CD4-positive, alpha-beta T cell (primary cell): ENCODE measurements at regions of chr6 and their contacts with region 1.

Region 1: DNA sequence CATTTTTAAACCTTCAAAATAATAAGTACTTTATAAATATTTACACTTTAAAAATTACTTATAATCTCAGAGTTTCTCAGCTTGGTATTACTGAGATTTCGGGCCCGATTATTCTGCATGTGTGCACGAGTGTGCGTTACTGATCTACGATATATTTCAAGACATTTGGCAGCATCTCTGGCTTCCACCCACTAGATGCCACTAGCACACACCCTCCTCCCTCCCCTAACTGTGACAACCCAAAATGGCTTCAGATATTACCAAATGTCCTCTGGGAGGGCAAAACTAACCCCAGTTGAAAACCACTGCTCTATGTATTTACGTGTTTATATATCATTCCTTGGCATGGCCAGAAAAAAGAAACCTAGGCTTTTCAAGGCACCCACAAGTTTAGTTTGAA is 95.9 kb downstream of the FYN start:
- DNase-seq: peak in 3 of 14 experiments; percentile 72 to 77 (median 73)
- ATAC-seq: peak; percentile 58
- H3K4me3 ChIP-seq: no peak overlapping the region
- H3K4me3 Mint-ChIP-seq: peak overlapping the region; percentile 59
- H3K27ac ChIP-seq: peak overlapping the region; percentile 34 to 49
- H3K27ac Mint-ChIP-seq: peak overlapping the region; percentile 84
- H3K4me1 ChIP-seq: peaks cover 77% of the 10 kb centered on the region
- H3K4me1 Mint-ChIP-seq: peaks cover 89% of the 10 kb centered on the region
- H3K27me3 ChIP-seq: no peaks in the 10 kb centered on the region
- H3K27me3 Mint-ChIP-seq: no peaks in the 10 kb centered on the region
- CTCF ChIP-seq: peak; percentile 25

Region 2: DNA sequence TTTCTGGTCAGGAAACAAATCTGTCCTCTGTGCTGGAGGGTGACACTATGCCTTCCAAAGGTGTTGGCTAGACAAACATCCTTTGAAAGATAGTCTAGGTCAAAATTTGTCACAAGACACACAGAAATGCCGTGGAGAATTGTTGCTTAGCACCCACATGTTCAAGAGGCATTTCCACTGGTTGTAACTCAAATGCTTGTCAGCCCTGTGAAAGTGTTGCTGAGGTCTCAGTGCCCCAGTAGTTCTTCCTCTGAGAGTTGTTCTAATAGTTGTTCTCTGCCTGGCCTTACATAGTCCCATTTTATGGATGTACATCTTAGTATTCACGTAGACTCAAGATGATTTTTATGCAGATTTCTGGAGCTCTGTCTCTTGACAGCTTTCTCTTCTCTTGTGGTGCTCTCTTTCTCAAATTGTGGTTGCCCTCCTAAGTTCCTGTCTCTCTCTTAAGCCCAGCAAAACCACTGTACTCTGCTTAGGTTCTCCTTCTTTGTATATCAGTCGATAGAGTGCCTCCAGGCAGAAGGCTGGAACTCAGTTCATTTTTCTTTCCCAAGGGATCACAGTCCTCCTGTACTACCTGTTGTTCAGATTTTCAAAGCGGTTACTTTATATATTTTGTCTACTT is 254.8 kb before region 1 on chr6:
- CTCF ChIA-PET with region 1: no interaction called
- POLR2A ChIA-PET with region 1: no interaction called
- intact Hi-C with region 1: no loop called
- DNase-seq: peak in 2 of 14 experiments; percentile 11 to 15
- ATAC-seq: peak; percentile 49
- H3K4me3 ChIP-seq: no peak overlapping the region
- H3K4me3 Mint-ChIP-seq: no peak overlapping the region
- H3K27ac ChIP-seq: no peak overlapping the region
- H3K27ac Mint-ChIP-seq: no peak overlapping the region
- H3K4me1 ChIP-seq: peaks cover 4% of the 10 kb centered on the region
- H3K4me1 Mint-ChIP-seq: peaks cover 17% of the 10 kb centered on the region
- H3K27me3 ChIP-seq: no peaks in the 10 kb centered on the region
- H3K27me3 Mint-ChIP-seq: no peaks in the 10 kb centered on the region
- CTCF ChIP-seq: no peak

Region 3: GRCh38 chr6:111721753-111722154 is 55.6 kb before region 1 on chr6:
- CTCF ChIA-PET with region 1: interaction called, 4 read pairs
- POLR2A ChIA-PET with region 1: interaction called, 4 read pairs
- intact Hi-C with region 1: loop called in 1 of 2 experiments (anchors 10 kb)
- DNase-seq: peak in 11 of 14 experiments; percentile 15 to 75 (median 33)
- ATAC-seq: peak; percentile 35
- H3K4me3 ChIP-seq: no peak overlapping the region
- H3K4me3 Mint-ChIP-seq: no peak overlapping the region
- H3K27ac ChIP-seq: no peak overlapping the region
- H3K27ac Mint-ChIP-seq: peak overlapping the region; percentile 93
- H3K4me1 ChIP-seq: peaks cover 67% of the 10 kb centered on the region
- H3K4me1 Mint-ChIP-seq: peaks cover 83% of the 10 kb centered on the region
- H3K27me3 ChIP-seq: no peaks in the 10 kb centered on the region
- H3K27me3 Mint-ChIP-seq: no peaks in the 10 kb centered on the region
- CTCF ChIP-seq: peak; percentile 60

Region 4: GRCh38 chr6:111793711-111794111 is 16.4 kb after region 1 on chr6:
- CTCF ChIA-PET with region 1: interaction called, 4 read pairs
- POLR2A ChIA-PET with region 1: no interaction called
- intact Hi-C with region 1: loop called in 1 of 2 experiments (anchors 2 kb)
- DNase-seq: peak in 8 of 14 experiments; percentile 26 to 88 (median 48)
- ATAC-seq: peak; percentile 63
- H3K4me3 ChIP-seq: peak overlapping the region; percentile 39
- H3K4me3 Mint-ChIP-seq: peak overlapping the region; percentile 79
- H3K27ac ChIP-seq: peak overlapping the region; percentile 5 to 61
- H3K27ac Mint-ChIP-seq: peak overlapping the region; percentile 78
- H3K4me1 ChIP-seq: peaks cover 57% of the 10 kb centered on the region
- H3K4me1 Mint-ChIP-seq: peaks cover 77% of the 10 kb centered on the region
- H3K27me3 ChIP-seq: no peaks in the 10 kb centered on the region
- H3K27me3 Mint-ChIP-seq: no peaks in the 10 kb centered on the region
- CTCF ChIP-seq: no peak